Activated CD4-positive, alpha-beta memory T cell treated with anti-CD3 and anti-CD28 coated beads for 36 hours (primary cell): ENCODE measurements at regions of chr4 and their contacts with region 1.

Region 1: GRCh38 chr4:80540785-80541469 is 205.4 kb downstream of the CFAP299 start:
- DNase-seq: no peak
- H3K4me3 Mint-ChIP-seq: no peak overlapping the region
- H3K27ac Mint-ChIP-seq: no peak overlapping the region
- H3K4me1 Mint-ChIP-seq: peaks cover 23% of the 10 kb centered on the region
- H3K27me3 Mint-ChIP-seq: peaks cover 34% of the 10 kb centered on the region

Region 2: GRCh38 chr4:80393246-80393969 is 147.5 kb before region 1 on chr4:
- CTCF ChIA-PET with region 1: no interaction called
- POLR2A ChIA-PET with region 1: no interaction called
- intact Hi-C with region 1: loop called (anchors 1 kb)
- DNase-seq: peak; percentile 29
- H3K4me3 Mint-ChIP-seq: no peak overlapping the region
- H3K27ac Mint-ChIP-seq: no peak overlapping the region
- H3K4me1 Mint-ChIP-seq: peaks cover 8% of the 10 kb centered on the region
- H3K27me3 Mint-ChIP-seq: no peaks in the 10 kb centered on the region

Region 3: DNA sequence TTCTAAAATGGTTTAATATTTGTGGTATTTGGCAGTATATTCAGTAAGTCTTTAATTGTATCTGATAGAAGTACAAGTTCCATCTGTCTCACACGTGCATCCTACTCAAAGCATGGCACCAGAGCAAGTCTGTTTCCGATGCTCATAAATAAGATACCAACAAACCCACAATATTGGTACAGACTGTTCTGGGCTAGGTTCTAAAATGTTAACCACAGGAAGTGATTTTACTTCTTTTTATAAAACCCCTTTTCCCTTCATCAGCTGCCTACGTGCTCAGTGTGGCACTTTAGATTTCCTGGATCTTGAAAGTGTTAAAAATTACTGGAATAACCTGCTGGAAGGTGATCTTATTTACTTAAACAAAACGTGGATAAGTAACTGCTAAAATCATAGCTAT is 40.3 kb before region 1 on chr4:
- CTCF ChIA-PET with region 1: no interaction called
- POLR2A ChIA-PET with region 1: no interaction called
- intact Hi-C with region 1: loop called (anchors 2 kb)
- DNase-seq: no peak
- H3K4me3 Mint-ChIP-seq: no peak overlapping the region
- H3K27ac Mint-ChIP-seq: no peak overlapping the region
- H3K4me1 Mint-ChIP-seq: peaks cover 34% of the 10 kb centered on the region
- H3K27me3 Mint-ChIP-seq: no peaks in the 10 kb centered on the region